Ovary (tissue), 10 donors: ENCODE measurements at regions of chr4 and their contacts with region 1.

Region 1: GRCh38 chr4:8340781-8341241 is 71.3 kb downstream of the HTRA3 start:
- DNase-seq: peak; percentile 89 to 93 (median 92)
- H3K4me3 ChIP-seq: no peak overlapping the region
- H3K27ac ChIP-seq: peak overlapping the region; percentile 50 to 90
- H3K4me1 ChIP-seq: peaks cover 25% of the 10 kb centered on the region
- H3K27me3 ChIP-seq: no peaks in the 10 kb centered on the region
- CTCF ChIP-seq: no peak
- EP300 ChIP-seq: no peak
- POLR2A ChIP-seq: no peak

Region 2: GRCh38 chr4:8260656-8261111 is 80.1 kb before region 1 on chr4:
- intact Hi-C with region 1: no loop called
- DNase-seq: peak; percentile 71 to 85 (median 75)
- H3K4me3 ChIP-seq: no peak overlapping the region
- H3K27ac ChIP-seq: peak overlapping the region; percentile 34 to 38
- H3K4me1 ChIP-seq: no peaks in the 10 kb centered on the region
- H3K27me3 ChIP-seq: no peaks in the 10 kb centered on the region
- CTCF ChIP-seq: no peak
- EP300 ChIP-seq: no peak
- POLR2A ChIP-seq: no peak

Region 3: GRCh38 chr4:8274765-8275547 is 65.9 kb before region 1 on chr4:
- intact Hi-C with region 1: loop called in 1 of 4 experiments (anchors 10 kb)
- DNase-seq: peak; percentile 94 to 97 (median 96)
- H3K4me3 ChIP-seq: no peak overlapping the region
- H3K27ac ChIP-seq: peak overlapping the region in 1 of 2 donors; percentile 72
- H3K4me1 ChIP-seq: peaks cover 50% of the 10 kb centered on the region
- H3K27me3 ChIP-seq: no peaks in the 10 kb centered on the region
- CTCF ChIP-seq: peak; percentile 30 to 71 (median 65)
- EP300 ChIP-seq: no peak
- POLR2A ChIP-seq: no peak